Vagina (tissue), 2 donors: ENCODE measurements at regions of chr7 and their contacts with region 1.

Region 1: DNA sequence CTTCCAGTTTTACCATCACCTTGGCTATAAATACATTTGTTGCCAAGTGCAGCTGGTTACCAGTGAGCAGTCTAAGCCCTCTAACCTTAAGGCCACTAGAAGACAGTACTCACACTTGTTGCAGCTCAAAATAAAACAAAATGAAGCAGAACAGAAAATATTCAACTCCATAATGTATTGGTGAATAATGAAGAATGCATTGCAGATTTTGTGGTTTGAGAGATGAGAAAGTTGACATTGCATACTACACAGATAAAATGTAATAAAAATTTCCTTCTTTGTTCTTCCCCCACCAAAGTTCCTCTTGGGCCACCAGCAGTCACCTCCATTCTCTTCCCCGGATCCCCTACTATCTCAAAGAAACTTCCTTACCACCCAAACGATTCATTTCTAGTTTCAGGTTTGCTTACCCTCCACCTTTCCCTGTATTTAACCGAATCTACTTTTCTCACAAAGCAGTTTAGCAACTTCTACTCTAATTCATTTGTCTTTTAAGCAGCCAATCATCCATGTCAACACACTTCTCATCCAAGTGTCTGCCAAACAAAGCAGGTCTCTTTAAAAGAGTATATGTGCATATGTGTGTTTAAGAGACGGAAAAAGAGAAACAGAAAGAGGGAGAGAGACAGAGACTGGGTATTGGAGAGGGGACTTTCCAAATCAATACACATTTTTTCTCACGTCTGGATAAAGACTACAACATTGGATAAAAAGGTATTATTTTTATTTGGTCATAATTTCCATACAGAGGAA is 35.7 kb upstream of the PRPS1L1 start:
- DNase-seq: no peak
- H3K4me3 ChIP-seq: no peak overlapping the region
- H3K27ac ChIP-seq: no peak overlapping the region
- H3K4me1 ChIP-seq: no peaks in the 10 kb centered on the region
- H3K27me3 ChIP-seq: no peaks in the 10 kb centered on the region
- CTCF ChIP-seq: no peak
- POLR2A ChIP-seq: no peak

Region 2: GRCh38 chr7:17599733-17600685 is 463.3 kb before region 1 on chr7:
- intact Hi-C with region 1: no loop called
- DNase-seq: no peak
- H3K4me3 ChIP-seq: no peak overlapping the region
- H3K27ac ChIP-seq: no peak overlapping the region
- H3K4me1 ChIP-seq: no peaks in the 10 kb centered on the region
- H3K27me3 ChIP-seq: no peaks in the 10 kb centered on the region
- CTCF ChIP-seq: no peak
- POLR2A ChIP-seq: no peak

Region 3: DNA sequence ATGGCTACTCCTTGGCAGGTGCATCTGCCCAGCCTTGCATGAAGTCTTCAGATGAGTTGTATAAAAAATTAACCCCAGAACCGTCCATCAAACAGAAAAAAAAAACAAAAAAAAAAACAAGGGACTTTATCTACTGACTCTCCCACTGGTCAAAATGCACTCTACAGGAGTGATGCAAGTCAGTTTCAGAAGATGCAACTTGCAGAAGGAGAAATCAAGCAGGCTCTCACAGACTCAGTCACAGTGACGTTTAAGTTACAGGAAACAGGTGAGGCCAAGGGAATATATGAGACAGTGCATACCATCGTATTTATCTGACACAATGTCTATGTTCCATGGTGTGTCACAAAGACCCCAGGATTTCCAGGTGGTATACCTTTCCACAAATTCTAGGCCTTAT is 18.2 kb before region 1 on chr7:
- intact Hi-C with region 1: loop called (anchors 2 kb)
- DNase-seq: no peak
- H3K4me3 ChIP-seq: no peak overlapping the region
- H3K27ac ChIP-seq: no peak overlapping the region
- H3K4me1 ChIP-seq: no peaks in the 10 kb centered on the region
- H3K27me3 ChIP-seq: no peaks in the 10 kb centered on the region
- CTCF ChIP-seq: no peak
- POLR2A ChIP-seq: no peak